Thyroid gland (tissue), 4 donors: ENCODE measurements at regions of chr4 and their contacts with region 1.

Region 1: DNA sequence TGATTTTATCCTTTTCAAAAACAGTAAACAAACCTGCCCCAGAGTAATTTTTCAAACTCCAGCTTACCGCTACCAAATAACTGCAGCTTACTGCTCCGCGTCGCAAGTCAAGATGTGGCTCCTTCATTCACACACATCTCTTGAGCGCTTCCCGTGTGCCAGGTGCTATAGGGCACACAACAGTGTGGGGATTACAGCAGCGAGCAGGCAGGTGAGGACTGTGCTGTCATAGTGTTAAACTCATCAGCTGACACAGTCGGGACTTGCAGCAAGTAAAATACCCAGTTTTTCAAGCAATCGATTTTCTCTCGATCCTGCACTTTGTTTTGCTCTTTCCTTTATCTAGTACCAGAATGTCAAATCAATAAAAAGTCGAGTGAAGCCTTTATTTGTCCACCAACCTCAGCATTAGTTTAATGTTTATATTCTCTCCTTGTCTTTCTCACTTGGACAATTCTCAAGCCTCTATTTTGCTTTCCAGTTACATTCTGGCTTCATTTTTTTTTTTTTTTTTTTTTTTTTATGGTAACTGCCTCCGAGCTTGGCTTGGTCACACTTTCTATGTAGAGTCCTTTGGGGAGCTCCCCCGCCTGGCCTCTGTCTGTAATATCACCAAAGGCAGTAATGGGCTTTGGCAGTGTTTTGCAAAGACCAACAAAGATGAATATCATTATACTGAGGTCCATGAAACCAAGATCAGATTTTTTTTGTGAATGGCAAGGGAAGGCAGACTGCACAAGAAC is 8.3 kb upstream of the ASB5 start:
- DNase-seq: peak; percentile 69 to 73
- H3K4me3 ChIP-seq: no peak overlapping the region
- H3K27ac ChIP-seq: no peak overlapping the region
- H3K4me1 ChIP-seq: peaks cover 0 to 2% of the 10 kb centered on the region in 2 donors
- H3K27me3 ChIP-seq: no peaks in the 10 kb centered on the region
- CTCF ChIP-seq: peak in 4 of 6 experiments; percentile 9 to 57 (median 48)
- POLR2A ChIP-seq: no peak

Region 2: GRCh38 chr4:175953960-175954521 is 323.3 kb before region 1 on chr4:
- intact Hi-C with region 1: no loop called
- DNase-seq: no peak
- H3K4me3 ChIP-seq: no peak overlapping the region
- H3K27ac ChIP-seq: no peak overlapping the region
- H3K4me1 ChIP-seq: no peaks in the 10 kb centered on the region
- H3K27me3 ChIP-seq: no peaks in the 10 kb centered on the region
- CTCF ChIP-seq: no peak
- POLR2A ChIP-seq: no peak

Region 3: DNA sequence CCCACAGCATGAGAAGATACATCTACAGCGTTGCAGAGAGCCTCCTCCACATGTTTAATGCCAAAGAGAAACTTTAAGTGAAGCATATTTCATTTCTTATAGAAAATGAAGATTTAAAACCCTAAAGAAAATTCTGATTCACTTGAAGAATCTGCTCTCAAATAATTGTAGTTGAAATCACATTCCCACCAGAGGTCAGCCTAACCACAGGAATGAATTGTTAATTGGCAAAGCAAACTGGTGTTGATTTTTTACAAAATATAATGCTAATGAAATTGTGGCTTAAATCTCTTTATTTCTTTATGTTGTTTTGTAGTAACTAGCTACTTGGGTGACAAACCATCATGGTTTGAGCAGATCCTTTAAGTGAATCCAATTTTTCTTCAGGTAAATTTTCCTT is 242.8 kb before region 1 on chr4:
- intact Hi-C with region 1: loop called (anchors 10 kb)
- DNase-seq: peak in 1 of 2 donors; percentile 9
- H3K4me3 ChIP-seq: no peak overlapping the region
- H3K27ac ChIP-seq: no peak overlapping the region
- H3K4me1 ChIP-seq: no peaks in the 10 kb centered on the region
- H3K27me3 ChIP-seq: no peaks in the 10 kb centered on the region
- CTCF ChIP-seq: peak in 4 of 6 experiments; percentile 39 to 71 (median 59)
- POLR2A ChIP-seq: no peak

Region 4: DNA sequence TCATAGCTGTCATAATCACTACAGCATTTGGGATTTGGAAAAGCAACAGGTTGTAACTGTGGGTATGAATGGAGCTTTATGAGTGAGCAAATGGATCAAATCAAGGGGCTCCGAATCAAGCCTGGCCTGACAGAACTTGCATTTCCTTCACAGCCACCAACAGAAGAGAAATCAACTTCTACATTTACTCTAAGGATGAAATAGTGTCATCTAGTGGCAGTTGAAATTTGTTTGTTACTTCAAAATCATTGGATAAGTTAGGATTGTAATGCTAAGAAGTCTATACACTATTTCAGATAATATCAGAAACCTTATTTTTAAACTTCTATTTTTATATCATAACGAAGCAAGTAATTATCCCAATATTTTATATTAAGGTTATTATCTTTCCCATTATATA is 222.4 kb before region 1 on chr4:
- intact Hi-C with region 1: no loop called
- DNase-seq: no peak
- H3K4me3 ChIP-seq: no peak overlapping the region
- H3K27ac ChIP-seq: no peak overlapping the region
- H3K4me1 ChIP-seq: no peaks in the 10 kb centered on the region
- H3K27me3 ChIP-seq: no peaks in the 10 kb centered on the region
- CTCF ChIP-seq: peak in 4 of 6 experiments; percentile 12 to 42 (median 37)
- POLR2A ChIP-seq: no peak

Region 5: DNA sequence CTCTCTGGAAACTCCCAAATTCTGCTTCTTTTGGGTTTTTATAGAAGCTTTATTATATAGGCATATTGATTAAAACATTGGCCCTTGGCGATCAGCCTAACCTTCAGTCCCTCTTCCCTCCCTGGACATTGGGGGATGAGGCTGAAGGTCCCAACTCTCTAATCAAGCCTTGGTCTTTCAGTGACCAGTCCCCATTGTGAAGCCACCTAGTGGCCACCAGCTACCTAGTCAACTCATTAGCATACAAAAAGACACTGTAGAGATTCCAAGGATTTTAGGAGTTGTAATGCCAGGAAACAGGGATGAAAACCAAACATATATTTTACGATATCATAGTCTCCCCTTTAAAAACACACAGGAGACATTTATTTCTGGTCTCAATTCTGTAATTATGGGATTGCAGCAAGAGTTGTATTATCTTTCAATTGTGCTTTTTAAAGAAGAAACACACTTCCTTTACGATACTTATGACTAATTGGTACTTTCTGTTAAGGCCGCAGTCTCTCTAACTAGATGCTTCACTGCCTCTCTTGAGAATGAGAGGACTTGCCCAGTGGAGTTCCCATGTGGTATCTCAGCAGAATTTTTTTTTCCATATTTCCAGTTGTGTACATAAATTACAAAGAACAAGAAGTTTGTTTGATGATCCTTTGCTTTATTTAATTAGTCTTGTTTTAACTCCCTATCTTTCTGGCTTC is 153.5 kb before region 1 on chr4:
- intact Hi-C with region 1: no loop called
- DNase-seq: peak; percentile 37 to 49
- H3K4me3 ChIP-seq: no peak overlapping the region
- H3K27ac ChIP-seq: no peak overlapping the region
- H3K4me1 ChIP-seq: no peaks in the 10 kb centered on the region
- H3K27me3 ChIP-seq: no peaks in the 10 kb centered on the region
- CTCF ChIP-seq: peak in 5 of 6 experiments; percentile 9 to 69 (median 44)
- POLR2A ChIP-seq: no peak